Right cardiac atrium (tissue), 5 donors: ENCODE measurements at regions of chr1 and their contacts with region 1.

Region 1: DNA sequence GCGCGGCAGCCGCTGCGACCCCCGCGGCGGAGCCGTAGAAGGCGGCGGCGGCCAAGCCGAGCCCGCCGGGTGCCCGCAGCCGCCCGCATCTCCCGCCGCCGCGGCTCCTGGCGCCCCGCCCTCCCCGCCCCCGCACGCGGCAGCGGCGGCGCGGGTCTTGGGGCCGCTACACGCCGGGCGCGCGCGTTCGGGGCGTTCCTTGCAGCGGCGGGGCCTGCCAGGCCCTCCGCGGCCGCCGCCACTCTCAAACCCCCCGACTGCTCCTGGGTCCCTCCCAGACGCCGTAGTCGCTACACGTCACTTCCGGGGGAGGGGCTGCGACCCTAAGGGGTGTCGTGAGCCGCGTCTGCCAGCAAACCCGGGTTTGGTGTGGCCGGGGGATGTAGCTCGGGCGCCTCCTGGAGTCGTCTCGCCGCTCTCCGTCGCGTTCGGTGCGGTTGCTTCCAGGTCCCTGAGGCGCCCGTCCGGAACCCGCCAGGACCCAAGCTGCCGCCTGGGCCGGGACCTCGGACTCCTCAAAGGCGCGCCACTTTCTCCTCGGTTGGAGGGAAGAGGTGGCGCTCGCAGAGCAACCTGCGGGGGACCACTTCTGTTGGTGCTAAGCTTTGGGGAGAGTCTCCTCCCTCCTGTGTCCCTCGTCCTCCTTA is at the start of gene ELK4:
- DNase-seq: peak; percentile 99 to 100 (median 100)
- ATAC-seq: peak; percentile 98 to 99
- H3K4me3 ChIP-seq: peak within 1 kb of the TSS; percentile 100
- H3K27ac ChIP-seq: peak within 1 kb of the TSS; percentile 100
- H3K4me1 ChIP-seq: no peaks in the 10 kb centered on the region
- H3K27me3 ChIP-seq: no peaks in the 10 kb centered on the region
- total RNA-seq, gene ELK4: 39.7 to 45.0 (median 43.2) TPM

Region 2: DNA sequence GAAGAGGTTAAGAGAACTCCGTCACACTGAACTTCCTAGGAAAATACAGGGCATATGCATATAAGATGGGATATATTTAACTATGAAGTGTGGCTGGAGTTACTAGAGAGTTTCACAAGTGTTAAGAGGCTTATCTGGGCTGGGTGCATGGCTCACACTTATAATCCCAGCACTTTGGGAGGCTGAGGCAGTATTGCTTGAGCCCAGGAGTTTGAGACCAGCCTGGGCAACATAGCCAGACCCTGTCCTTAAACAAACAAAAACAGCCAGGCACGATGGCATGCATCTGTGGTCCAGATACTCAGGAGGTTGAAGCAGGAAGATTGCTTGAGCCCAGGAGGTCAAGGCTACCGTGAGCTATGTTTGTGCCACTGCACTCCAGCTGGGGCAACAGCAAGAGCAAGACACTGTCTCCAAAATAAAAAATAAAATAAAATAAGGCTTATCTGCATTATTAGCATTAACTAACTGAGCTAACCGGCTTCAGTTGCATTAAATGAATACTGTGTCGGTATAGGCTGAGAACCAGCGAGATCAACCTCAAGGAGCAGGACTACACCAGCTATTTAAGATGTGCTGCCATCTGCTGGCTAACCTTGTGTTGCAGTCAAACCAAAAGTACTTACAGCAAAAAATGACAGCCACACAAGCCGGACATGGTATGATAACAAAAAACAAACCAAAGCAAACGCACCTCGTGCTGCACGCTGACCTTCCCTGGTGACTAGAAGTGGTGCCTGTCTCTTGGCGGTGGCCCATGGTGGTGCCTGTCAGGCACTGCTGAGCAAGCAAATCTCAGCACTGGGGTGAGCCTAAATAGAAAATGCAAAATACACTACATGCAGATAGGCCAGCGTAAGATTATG is 490.4 kb before region 1 on chr1:
- intact Hi-C with region 1: no loop called
- DNase-seq: peak; percentile 75 to 86 (median 77)
- ATAC-seq: peak; percentile 82 to 85
- H3K4me3 ChIP-seq: no peak overlapping the region
- H3K27ac ChIP-seq: no peak overlapping the region
- H3K4me1 ChIP-seq: peaks cover 2% of the 10 kb centered on the region
- H3K27me3 ChIP-seq: no peaks in the 10 kb centered on the region

Region 3: DNA sequence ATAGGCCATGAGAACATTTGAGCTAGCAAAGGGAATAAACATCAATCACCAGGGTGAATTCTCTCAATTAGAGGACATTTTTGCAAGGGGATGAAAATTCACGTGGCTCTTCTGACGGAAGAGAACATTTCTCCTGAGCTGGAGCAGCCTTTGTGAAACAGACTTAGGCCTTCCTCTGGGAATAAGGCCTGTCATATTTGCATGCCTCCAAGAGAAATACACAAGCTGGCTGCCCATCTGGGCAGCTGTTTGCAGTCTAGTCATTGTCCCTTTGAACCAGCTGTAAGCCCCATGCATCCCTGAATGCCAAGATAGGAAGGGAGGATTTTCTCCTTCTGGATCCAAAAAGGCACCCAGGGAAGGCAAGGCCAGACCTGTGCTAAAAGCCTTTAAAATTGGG is 215.5 kb before region 1 on chr1:
- intact Hi-C with region 1: no loop called
- DNase-seq: no peak
- ATAC-seq: peak; percentile 25 to 36
- H3K4me3 ChIP-seq: no peak overlapping the region
- H3K27ac ChIP-seq: no peak overlapping the region
- H3K4me1 ChIP-seq: no peaks in the 10 kb centered on the region
- H3K27me3 ChIP-seq: no peaks in the 10 kb centered on the region

Region 4: GRCh38 chr1:205504311-205504984 is 127.4 kb before region 1 on chr1 and contains the start of gene CDK18:
- intact Hi-C with region 1: no loop called
- DNase-seq: peak; percentile 78 to 93 (median 92)
- ATAC-seq: peak; percentile 82 to 86
- H3K4me3 ChIP-seq: peak within 1 kb of the TSS; percentile 41
- H3K27ac ChIP-seq: peak within 1 kb of the TSS; percentile 73
- H3K4me1 ChIP-seq: peaks cover 5% of the 10 kb centered on the region
- H3K27me3 ChIP-seq: no peaks in the 10 kb centered on the region
- total RNA-seq, gene CDK18: 80.2 to 148 (median 141) TPM

Region 5: GRCh38 chr1:205536759-205537361 is 95.0 kb before region 1 on chr1:
- intact Hi-C with region 1: loop called in 1 of 4 experiments (anchors 10 kb)
- DNase-seq: peak in 1 of 3 donors; percentile 74
- ATAC-seq: peak; percentile 47 to 54
- H3K4me3 ChIP-seq: no peak overlapping the region
- H3K27ac ChIP-seq: no peak overlapping the region
- H3K4me1 ChIP-seq: no peaks in the 10 kb centered on the region
- H3K27me3 ChIP-seq: no peaks in the 10 kb centered on the region

Region 6: GRCh38 chr1:205598841-205599668 is 32.8 kb before region 1 on chr1:
- intact Hi-C with region 1: loop called in 3 of 4 experiments (anchors 5 kb)
- DNase-seq: peak; percentile 90 to 93 (median 92)
- ATAC-seq: peak; percentile 93 to 95
- H3K4me3 ChIP-seq: no peak overlapping the region
- H3K27ac ChIP-seq: peak overlapping the region; percentile 63
- H3K4me1 ChIP-seq: peaks cover 13% of the 10 kb centered on the region
- H3K27me3 ChIP-seq: no peaks in the 10 kb centered on the region